ENCODE measurements at regions of chr1 and their contacts with region 1.

Region 1: DNA sequence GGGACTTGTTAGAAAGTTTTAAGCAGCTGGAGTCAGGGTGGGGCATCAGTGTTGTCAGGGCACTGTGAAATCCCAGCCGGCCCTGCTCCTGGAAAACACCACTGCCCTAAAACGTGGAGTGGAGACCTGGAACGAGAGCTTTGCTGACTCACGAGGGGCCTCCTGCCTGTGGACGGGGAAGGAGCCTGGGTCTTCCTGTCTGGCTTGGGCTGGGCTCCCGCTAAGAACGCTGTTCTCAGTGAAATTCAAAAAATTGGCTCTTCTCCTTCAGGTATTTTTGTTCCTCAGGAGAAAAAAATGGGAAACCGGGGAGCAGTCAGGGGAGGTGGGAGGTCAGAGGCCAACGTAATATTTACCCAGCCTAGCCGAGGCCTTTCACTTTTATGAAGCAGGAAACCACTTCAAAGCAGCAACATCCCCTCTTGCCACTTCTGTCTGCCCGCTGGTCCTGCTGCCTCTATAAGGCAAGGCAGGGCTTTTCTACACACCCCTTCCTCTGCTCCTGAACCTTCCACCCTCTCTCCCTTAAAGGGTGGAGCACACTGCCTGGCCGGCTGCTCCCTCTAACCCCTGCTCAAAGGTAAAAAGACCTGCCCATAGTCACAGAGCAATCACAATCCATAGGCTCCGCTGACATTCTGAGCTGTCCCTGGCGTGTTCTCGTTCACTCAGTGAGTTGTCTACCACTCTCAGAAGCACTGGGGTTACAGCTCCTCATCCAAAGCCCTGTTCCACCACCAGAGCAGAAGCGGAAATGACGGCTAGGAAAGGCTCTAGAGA is 8.0 kb downstream of the PLXNA2 start:
- DNase-seq: no peak
- H3K4me3 ChIP-seq: no peak overlapping the region
- H3K27ac ChIP-seq: peak overlapping the region in 5 of 8 donors; percentile 23 to 56 (median 31)
- H3K4me1 ChIP-seq: peaks cover 6 to 39% (median 19%) of the 10 kb centered on the region in 6 donors
- H3K27me3 ChIP-seq: peaks cover 0 to 35% (median 0%) of the 10 kb centered on the region in 7 donors
- CTCF ChIP-seq: no peak
- POLR2A ChIP-seq: no peak

Region 2: GRCh38 chr1:207848234-207848633 is 387.9 kb before region 1 on chr1:
- intact Hi-C with region 1: no loop called
- DNase-seq: peak; percentile 91
- H3K4me3 ChIP-seq: peak overlapping the region in 1 of 8 donors; percentile 17
- H3K27ac ChIP-seq: peak overlapping the region in 7 of 8 donors; percentile 62 to 87 (median 81)
- H3K4me1 ChIP-seq: peaks cover 51 to 100% (median 94%) of the 10 kb centered on the region in 6 donors
- H3K27me3 ChIP-seq: no peaks in the 10 kb centered on the region
- CTCF ChIP-seq: no peak
- POLR2A ChIP-seq: peak in 1 of 3 donors; percentile 24

Region 3: GRCh38 chr1:208132287-208132883 is 103.8 kb before region 1 on chr1:
- intact Hi-C with region 1: loop called (anchors 2 kb)
- DNase-seq: peak; percentile 88
- H3K4me3 ChIP-seq: no peak overlapping the region
- H3K27ac ChIP-seq: peak overlapping the region in 1 of 8 donors; percentile 40
- H3K4me1 ChIP-seq: peaks cover 0 to 11% (median 3%) of the 10 kb centered on the region in 6 donors
- H3K27me3 ChIP-seq: peaks cover 0 to 23% (median 0%) of the 10 kb centered on the region in 7 donors
- CTCF ChIP-seq: peak; percentile 27 to 85 (median 82)
- POLR2A ChIP-seq: no peak